ENCODE measurements at regions of chr3 and their contacts with region 1.

Region 1: GRCh38 chr3:154294016-154294415 is 30.3 kb downstream of the DHX36 start:
- DNase-seq: no peak
- ATAC-seq: no peak
- H3K4me3 Mint-ChIP-seq: no peak overlapping the region
- H3K27ac Mint-ChIP-seq: no peak overlapping the region
- H3K4me1 Mint-ChIP-seq: no peaks in the 10 kb centered on the region
- H3K27me3 Mint-ChIP-seq: no peaks in the 10 kb centered on the region

Region 2: DNA sequence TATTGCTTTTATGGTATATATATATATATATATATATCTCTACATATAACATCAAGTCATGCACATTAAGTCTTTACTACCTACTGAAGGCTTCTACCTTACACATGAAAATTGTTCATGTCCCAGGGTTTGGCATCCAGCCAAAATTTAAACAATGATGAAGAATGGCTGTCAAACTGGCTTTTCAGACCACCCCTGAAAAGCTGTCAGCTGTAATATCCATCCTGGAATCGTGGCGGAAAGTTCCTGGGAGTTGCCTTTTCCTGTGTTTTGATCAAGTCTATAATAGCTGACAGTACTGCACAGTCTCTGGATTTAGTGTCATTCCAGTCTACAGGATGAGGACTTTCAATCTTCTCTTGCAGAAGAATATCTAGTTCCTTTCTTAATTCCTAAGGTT is 18.1 kb before region 1 on chr3:
- CTCF ChIA-PET with region 1: interaction called, 4 read pairs
- POLR2A ChIA-PET with region 1: no interaction called
- intact Hi-C with region 1: loop called in 1 of 2 experiments (anchors 2 kb)
- DNase-seq: no peak
- ATAC-seq: no peak
- H3K4me3 Mint-ChIP-seq: no peak overlapping the region
- H3K27ac Mint-ChIP-seq: no peak overlapping the region
- H3K4me1 Mint-ChIP-seq: no peaks in the 10 kb centered on the region
- H3K27me3 Mint-ChIP-seq: no peaks in the 10 kb centered on the region

Measured in activated CD4-positive, alpha-beta T cell treated with anti-CD3 and anti-CD28 coated beads for 36 hours (primary cell).